Activated CD4-positive, alpha-beta memory T cell treated with anti-CD3 and anti-CD28 coated beads for 36 hours (primary cell): ENCODE measurements at regions of chr1 and their contacts with region 1.

Region 1: DNA sequence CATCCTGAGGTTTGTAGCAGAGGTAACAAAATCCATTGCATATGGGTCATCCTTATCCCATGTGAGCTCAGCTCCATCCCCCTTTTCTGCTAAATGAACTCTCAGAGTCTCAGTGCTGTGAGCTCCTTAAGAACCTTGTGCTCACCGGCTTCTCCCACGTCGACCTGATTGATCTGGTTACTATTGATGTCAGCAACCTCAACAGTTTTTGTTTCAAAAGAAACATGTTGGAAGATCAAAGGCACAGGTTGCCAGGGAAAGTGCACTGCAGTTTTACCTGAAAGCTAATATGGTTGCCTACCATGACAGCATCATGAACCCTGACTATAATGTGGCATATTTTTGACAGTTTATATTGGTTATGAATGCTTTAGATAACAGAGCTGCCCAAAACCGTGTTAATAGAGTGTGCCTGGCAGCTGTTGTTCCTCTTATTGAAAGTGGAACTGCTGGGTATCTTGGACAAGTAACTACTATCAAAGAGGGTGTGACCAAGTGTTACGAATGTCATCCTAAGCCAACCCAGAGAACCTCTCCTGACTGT is 131.4 kb downstream of the HS2ST1 start:
- DNase-seq: peak; percentile 75
- H3K4me3 Mint-ChIP-seq: peak overlapping the region; percentile 45
- H3K27ac Mint-ChIP-seq: peak overlapping the region; percentile 82
- H3K4me1 Mint-ChIP-seq: peaks cover 48% of the 10 kb centered on the region
- H3K27me3 Mint-ChIP-seq: no peaks in the 10 kb centered on the region

Region 2: DNA sequence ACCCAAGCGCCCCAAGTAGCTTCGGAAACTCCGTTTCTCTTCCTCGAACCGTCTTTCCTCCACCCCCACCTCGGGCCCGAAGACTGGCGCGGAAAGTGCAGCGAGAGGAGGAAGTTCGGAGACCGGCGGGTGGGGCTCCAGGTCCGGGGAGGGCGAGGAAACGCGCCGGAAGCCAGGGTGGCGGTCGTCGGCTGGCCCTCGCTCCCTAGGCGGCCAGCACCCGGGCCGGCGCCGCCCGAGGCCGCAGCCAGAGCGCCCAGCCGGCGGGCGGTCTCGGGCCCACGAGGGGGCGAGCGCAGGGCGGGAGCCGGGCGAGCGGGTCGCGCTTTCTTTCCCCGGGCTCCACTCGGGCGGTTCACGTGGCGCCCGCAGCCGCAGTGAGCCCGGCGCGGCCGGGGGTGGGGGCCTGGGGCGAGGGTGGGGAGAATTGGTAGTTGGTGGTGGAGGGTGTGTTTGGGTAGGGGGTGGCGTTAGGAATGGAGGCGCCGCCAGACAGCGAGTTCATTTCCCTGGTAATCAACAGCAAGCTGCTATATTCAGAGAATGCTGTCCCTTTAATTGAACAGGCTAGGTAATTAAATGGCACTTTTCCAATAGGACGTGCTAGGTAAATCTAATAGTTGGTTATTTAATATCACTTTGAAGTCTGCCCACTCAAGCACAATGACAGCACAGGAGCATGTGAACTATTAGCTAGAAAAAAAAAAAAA is 289.5 kb after region 1 on chr1:
- CTCF ChIA-PET with region 1: no interaction called
- POLR2A ChIA-PET with region 1: no interaction called
- intact Hi-C with region 1: loop called (anchors 10 kb)
- DNase-seq: peak; percentile 75
- H3K4me3 Mint-ChIP-seq: peak overlapping the region; percentile 76
- H3K27ac Mint-ChIP-seq: peak overlapping the region; percentile 91
- H3K4me1 Mint-ChIP-seq: peaks cover 60% of the 10 kb centered on the region
- H3K27me3 Mint-ChIP-seq: peaks cover 6% of the 10 kb centered on the region